OCI-LY7 (cell line): ENCODE measurements at regions of chr3 and their contacts with region 1.

Region 1: GRCh38 chr3:107064445-107065060 is 312.7 kb upstream of the CCDC54 start:
- DNase-seq: peak; percentile 73
- H3K4me3 ChIP-seq: no peak overlapping the region
- H3K27ac ChIP-seq: no peak overlapping the region
- H3K4me1 ChIP-seq: no peaks in the 10 kb centered on the region
- CTCF ChIP-seq: peak; percentile 95

Region 2: DNA sequence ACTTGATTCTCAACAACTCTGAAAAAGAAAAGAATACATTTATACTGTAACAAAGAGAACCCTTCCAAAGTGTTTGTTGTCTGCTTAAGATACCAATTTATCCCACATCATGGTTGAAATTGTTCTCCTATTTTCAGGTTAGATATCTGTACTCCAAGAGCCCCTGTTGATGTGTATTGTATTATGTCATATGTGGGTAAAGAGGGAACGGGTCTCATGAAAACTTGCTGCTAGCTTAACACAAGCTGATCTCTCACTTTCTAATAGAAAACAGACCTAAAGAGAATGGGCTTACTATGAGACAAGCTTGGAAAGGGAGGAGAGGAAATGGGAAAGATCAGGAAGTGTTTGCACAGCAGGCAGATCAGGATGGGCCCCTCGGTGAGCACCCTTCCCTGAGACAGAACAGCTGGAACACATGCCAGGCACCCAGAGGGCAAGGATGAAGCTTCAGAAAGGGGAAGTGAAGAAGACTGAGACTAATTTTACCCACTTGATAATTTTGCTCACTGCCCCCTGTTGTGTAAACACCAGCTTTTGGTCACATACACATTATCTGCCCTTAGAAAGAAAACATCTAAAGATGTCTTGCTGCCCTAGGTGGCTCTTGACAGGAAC is 435.2 kb before region 1 on chr3:
- CTCF ChIA-PET with region 1: no interaction called
- POLR2A ChIA-PET with region 1: no interaction called
- intact Hi-C with region 1: loop called (anchors 10 kb)
- DNase-seq: peak; percentile 19
- H3K4me3 ChIP-seq: no peak overlapping the region
- H3K27ac ChIP-seq: no peak overlapping the region
- H3K4me1 ChIP-seq: peaks cover 19% of the 10 kb centered on the region
- CTCF ChIP-seq: no peak

Region 3: GRCh38 chr3:106824856-106825255 is 239.7 kb before region 1 on chr3:
- CTCF ChIA-PET with region 1: no interaction called
- POLR2A ChIA-PET with region 1: no interaction called
- intact Hi-C with region 1: loop called (anchors 2 kb)
- DNase-seq: peak; percentile 18
- H3K4me3 ChIP-seq: no peak overlapping the region
- H3K27ac ChIP-seq: no peak overlapping the region
- H3K4me1 ChIP-seq: no peaks in the 10 kb centered on the region
- CTCF ChIP-seq: peak; percentile 58

Region 4: GRCh38 chr3:106963442-106963841 is 101.1 kb before region 1 on chr3:
- CTCF ChIA-PET with region 1: no interaction called
- POLR2A ChIA-PET with region 1: no interaction called
- intact Hi-C with region 1: no loop called
- DNase-seq: no peak
- H3K4me3 ChIP-seq: no peak overlapping the region
- H3K27ac ChIP-seq: no peak overlapping the region
- H3K4me1 ChIP-seq: no peaks in the 10 kb centered on the region
- CTCF ChIP-seq: no peak